IMR-90 (cell line): ENCODE measurements at regions of chr9 and their contacts with region 1.

Region 1: GRCh38 chr9:131125128-131126058 is at the start of gene NUP214:
- DNase-seq: peak; percentile 96
- ATAC-seq: peak; percentile 100
- H3K4me3 ChIP-seq: peak within 1 kb of the TSS; percentile 85
- H3K27ac ChIP-seq: peak within 1 kb of the TSS; percentile 76
- H3K4me1 ChIP-seq: no peaks in the 10 kb centered on the region
- H3K27me3 ChIP-seq: peaks cover 2% of the 10 kb centered on the region; the same call in 1 of the 2 replicates
- CTCF ChIP-seq: no peak
- POLR2A ChIP-seq: peak; percentile 90
- RAD21 ChIP-seq: no peak
- total RNA-seq, gene NUP214: 6.9 and 7.9 TPM in 2 replicates

Region 2: GRCh38 chr9:130467371-130467770 is 658.0 kb before region 1 on chr9:
- CTCF ChIA-PET with region 1: no interaction called
- POLR2A ChIA-PET with region 1: no interaction called
- dilution Hi-C with region 1: no loop called
- in situ Hi-C with region 1: no loop called
- intact Hi-C with region 1: no loop called
- DNase-seq: no peak
- ATAC-seq: no peak
- H3K4me3 ChIP-seq: no peak overlapping the region
- H3K27ac ChIP-seq: no peak overlapping the region
- H3K4me1 ChIP-seq: no peaks in the 10 kb centered on the region
- H3K27me3 ChIP-seq: peaks cover 26% of the 10 kb centered on the region
- CTCF ChIP-seq: no peak
- POLR2A ChIP-seq: no peak
- RAD21 ChIP-seq: no peak

Region 3: GRCh38 chr9:131053896-131054295 is 71.5 kb before region 1 on chr9:
- CTCF ChIA-PET with region 1: no interaction called
- POLR2A ChIA-PET with region 1: no interaction called
- dilution Hi-C with region 1: no loop called
- in situ Hi-C with region 1: no loop called
- intact Hi-C with region 1: loop called (anchors 2 kb)
- DNase-seq: no peak
- ATAC-seq: no peak
- H3K4me3 ChIP-seq: no peak overlapping the region
- H3K27ac ChIP-seq: no peak overlapping the region
- H3K4me1 ChIP-seq: no peaks in the 10 kb centered on the region
- H3K27me3 ChIP-seq: peaks cover 25% of the 10 kb centered on the region
- CTCF ChIP-seq: no peak
- POLR2A ChIP-seq: no peak
- RAD21 ChIP-seq: no peak

Region 4: DNA sequence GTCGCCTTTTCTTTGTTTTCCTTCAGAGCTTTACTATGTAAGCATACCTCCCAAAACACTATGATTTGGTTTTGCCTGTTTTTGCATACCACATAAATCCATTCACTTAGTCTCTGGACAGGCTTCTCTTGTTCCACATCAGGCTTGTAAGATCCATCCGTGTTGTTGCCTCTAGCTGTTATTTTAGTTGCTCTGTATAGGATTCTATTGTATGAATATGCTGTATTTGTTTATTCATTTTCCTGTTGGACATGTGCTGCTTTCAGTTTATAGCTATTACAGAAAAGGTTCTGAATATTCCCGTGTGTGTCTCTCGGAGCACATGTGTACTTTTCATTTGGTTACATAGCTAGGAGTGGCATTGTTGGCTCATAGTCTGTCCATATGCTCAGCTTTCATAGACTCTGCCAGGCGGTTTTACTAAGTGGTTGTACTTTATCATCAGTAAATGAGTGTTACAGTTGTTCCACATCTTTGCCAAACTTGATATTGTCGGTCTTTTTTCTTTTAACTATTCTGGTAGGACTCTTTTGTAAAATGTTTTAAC is 41.8 kb after region 1 on chr9:
- CTCF ChIA-PET with region 1: no interaction called
- POLR2A ChIA-PET with region 1: no interaction called
- dilution Hi-C with region 1: no loop called
- in situ Hi-C with region 1: no loop called
- intact Hi-C with region 1: loop called (anchors 5 kb)
- DNase-seq: no peak
- ATAC-seq: no peak
- H3K4me3 ChIP-seq: no peak overlapping the region
- H3K27ac ChIP-seq: no peak overlapping the region
- H3K4me1 ChIP-seq: no peaks in the 10 kb centered on the region
- H3K27me3 ChIP-seq: no peaks in the 10 kb centered on the region
- CTCF ChIP-seq: no peak
- POLR2A ChIP-seq: no peak
- RAD21 ChIP-seq: no peak

Region 5: DNA sequence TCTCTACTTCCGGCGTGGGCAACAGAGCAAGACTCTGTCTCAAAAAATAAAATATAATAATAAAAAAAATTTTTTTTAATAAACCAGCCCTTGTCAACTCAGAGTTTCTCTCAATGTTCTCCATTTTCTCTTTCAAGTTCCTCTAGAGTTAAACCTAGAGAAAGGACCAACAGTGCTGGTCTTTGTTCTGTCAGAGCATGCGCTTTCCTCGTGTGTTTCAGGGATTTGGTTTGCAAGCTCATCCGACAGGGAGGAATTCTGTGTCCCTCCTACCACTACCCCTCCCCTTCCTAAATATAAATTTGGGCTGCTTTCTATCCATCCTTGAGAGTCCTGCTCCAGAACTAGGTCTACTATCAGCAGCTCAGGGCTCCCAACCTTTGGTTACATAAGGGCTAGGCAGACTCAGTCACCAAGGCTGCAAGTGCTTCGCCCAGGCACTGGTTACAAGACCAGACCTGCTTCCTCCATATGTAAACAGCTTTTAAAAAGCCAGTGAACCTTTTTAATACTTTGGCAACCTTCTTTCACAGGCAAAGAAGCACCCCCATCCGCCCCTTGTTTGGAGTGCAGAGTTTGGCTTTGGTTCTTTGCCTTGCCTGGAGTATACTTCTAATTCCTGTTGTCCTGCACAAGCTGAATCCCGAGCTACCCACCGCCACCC is 1215.9 kb after region 1 on chr9:
- CTCF ChIA-PET with region 1: no interaction called
- POLR2A ChIA-PET with region 1: no interaction called
- dilution Hi-C with region 1: no loop called
- in situ Hi-C with region 1: loop called (anchors 25 kb)
- intact Hi-C with region 1: no loop called
- DNase-seq: no peak
- ATAC-seq: no peak
- H3K4me3 ChIP-seq: no peak overlapping the region
- H3K27ac ChIP-seq: no peak overlapping the region
- H3K4me1 ChIP-seq: no peaks in the 10 kb centered on the region
- H3K27me3 ChIP-seq: no peaks in the 10 kb centered on the region
- CTCF ChIP-seq: no peak
- POLR2A ChIP-seq: no peak
- RAD21 ChIP-seq: no peak